Dorsolateral prefrontal cortex (tissue), 120 donors: ENCODE measurements at regions of chr9 and their contacts with region 1.

Region 1: GRCh38 chr9:135241381-135242048 is 154.0 kb downstream of the OLFM1 start:
- DNase-seq: peak in 3 of 10 donors; percentile 42 to 70 (median 50)
- H3K4me3 ChIP-seq: no peak overlapping the region
- H3K27ac ChIP-seq: peak overlapping the region in 56 of 59 donors; percentile 4 to 93 (median 74)
- H3K27me3 ChIP-seq: peaks cover 0 to 17% (median 0%) of the 10 kb centered on the region in 45 donors
- CTCF ChIP-seq: no peak

Region 2: GRCh38 chr9:135186248-135187164 is 55.0 kb before region 1 on chr9:
- intact Hi-C with region 1: no loop called
- DNase-seq: no peak
- H3K4me3 ChIP-seq: no peak overlapping the region
- H3K27ac ChIP-seq: no peak overlapping the region
- H3K27me3 ChIP-seq: peaks cover 0 to 21% (median 0%) of the 10 kb centered on the region in 45 donors
- CTCF ChIP-seq: no peak

Region 3: GRCh38 chr9:135215571-135216161 is 25.8 kb before region 1 on chr9:
- intact Hi-C with region 1: loop called (anchors 1 to 2 kb)
- DNase-seq: peak in 3 of 10 donors; percentile 42 to 50 (median 43)
- H3K4me3 ChIP-seq: no peak overlapping the region
- H3K27ac ChIP-seq: peak overlapping the region in 18 of 59 donors; percentile 16 to 81 (median 44)
- H3K27me3 ChIP-seq: peaks cover 0 to 52% (median 0%) of the 10 kb centered on the region in 45 donors
- CTCF ChIP-seq: no peak

Region 4: GRCh38 chr9:135343837-135344522 is 102.5 kb after region 1 on chr9:
- intact Hi-C with region 1: loop called in 1 of 2 experiments (anchors 1 kb)
- DNase-seq: peak in 9 of 10 donors; percentile 44 to 82 (median 68)
- H3K4me3 ChIP-seq: no peak overlapping the region
- H3K27ac ChIP-seq: peak overlapping the region in 32 of 59 donors; percentile 13 to 88 (median 71)
- H3K27me3 ChIP-seq: peaks cover 0 to 51% (median 0%) of the 10 kb centered on the region in 45 donors
- CTCF ChIP-seq: peak; percentile 72 to 98 (median 90)